Heart left ventricle (tissue), 16 donors: ENCODE measurements at regions of chr1 and their contacts with region 1.

Region 1: DNA sequence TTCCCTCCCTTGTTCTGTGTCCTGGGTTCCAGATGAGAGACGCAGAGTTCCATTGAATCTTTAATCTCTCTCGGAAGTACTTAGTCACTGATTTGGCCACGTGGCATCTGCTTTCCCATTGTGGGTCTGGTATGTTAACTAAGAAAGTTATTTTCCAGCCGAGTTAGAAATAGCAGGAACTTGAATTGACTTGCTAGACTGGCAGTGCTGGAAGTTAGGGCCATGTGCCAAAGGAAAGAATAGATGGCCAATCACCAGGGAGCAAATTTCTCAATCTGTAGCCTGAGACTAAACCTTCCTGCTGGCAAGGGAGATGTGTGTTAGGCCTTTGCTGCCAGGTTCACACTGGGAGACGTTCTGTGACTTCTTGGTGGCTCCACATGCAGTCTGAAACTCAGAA is 24.2 kb upstream of the SLFNL1 start:
- DNase-seq: peak in 4 of 5 donors; percentile 36 to 74 (median 43)
- ATAC-seq: peak; percentile 72 to 90 (median 84)
- H3K4me3 ChIP-seq: peak overlapping the region in 1 of 12 donors; percentile 1
- H3K27ac ChIP-seq: peak overlapping the region in 11 of 12 donors; percentile 25 to 74 (median 58)
- H3K4me1 ChIP-seq: peaks cover 0 to 34% (median 26%) of the 10 kb centered on the region in 12 donors
- H3K27me3 ChIP-seq: no peaks in the 10 kb centered on the region
- CTCF ChIP-seq: no peak
- POLR2A ChIP-seq: no peak

Region 2: DNA sequence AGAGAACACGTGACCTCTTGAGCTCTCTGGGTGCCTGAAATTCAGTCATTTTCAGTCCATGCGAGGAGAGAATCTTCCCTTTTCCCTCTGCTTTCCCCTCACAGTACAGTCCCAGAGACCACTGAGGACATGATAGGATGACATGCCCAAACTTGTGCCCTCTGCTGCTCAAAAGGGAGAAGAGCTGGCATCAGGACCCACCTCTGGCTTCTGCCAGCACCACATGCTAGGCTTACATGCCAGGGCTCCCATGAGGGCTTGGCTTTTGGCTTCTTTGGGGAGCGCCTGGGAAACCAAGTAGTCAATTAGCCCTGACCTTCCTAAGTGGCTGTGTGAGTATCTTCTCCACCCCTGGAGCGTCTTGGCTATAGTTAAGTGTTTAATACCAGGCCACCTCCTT is 275.9 kb before region 1 on chr1:
- intact Hi-C with region 1: no loop called
- DNase-seq: no peak
- ATAC-seq: peak; percentile 21 to 73 (median 42)
- H3K4me3 ChIP-seq: no peak overlapping the region
- H3K27ac ChIP-seq: peak overlapping the region in 4 of 12 donors; percentile 28 to 46 (median 37)
- H3K4me1 ChIP-seq: peaks cover 0 to 51% (median 16%) of the 10 kb centered on the region in 12 donors
- H3K27me3 ChIP-seq: no peaks in the 10 kb centered on the region
- CTCF ChIP-seq: peak in 6 of 12 donors; percentile 12 to 47 (median 25)
- POLR2A ChIP-seq: no peak

Region 3: DNA sequence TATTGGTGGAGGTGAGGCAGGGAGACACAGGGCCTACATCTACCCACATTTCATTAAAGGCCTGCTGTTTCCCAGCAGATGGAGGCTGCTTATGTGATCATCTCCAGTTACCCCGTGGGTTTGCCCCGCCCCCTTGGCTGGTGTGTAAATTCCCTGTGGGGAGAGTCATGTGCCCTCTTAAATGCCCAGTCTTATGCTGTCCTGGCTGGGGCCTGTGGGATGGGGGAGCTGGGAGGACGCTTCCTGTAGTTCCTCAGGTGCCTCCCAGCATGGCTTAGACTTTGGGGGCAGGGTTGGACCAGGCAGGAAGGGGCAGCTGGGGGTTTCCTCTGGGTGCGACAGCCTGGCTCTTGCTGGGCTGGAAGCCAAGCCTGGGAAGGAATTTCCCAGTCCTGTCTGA is 168.0 kb before region 1 on chr1:
- intact Hi-C with region 1: loop called in 1 of 10 experiments (anchors 10 kb)
- DNase-seq: peak in 4 of 5 donors; percentile 30 to 62 (median 59)
- ATAC-seq: peak in 3 of 4 donors; percentile 59 to 74 (median 70)
- H3K4me3 ChIP-seq: no peak overlapping the region
- H3K27ac ChIP-seq: peak overlapping the region in 8 of 12 donors; percentile 20 to 60 (median 52)
- H3K4me1 ChIP-seq: peaks cover 0 to 32% (median 11%) of the 10 kb centered on the region in 12 donors
- H3K27me3 ChIP-seq: peaks cover 0 to 2% (median 0%) of the 10 kb centered on the region in 9 donors
- CTCF ChIP-seq: no peak
- POLR2A ChIP-seq: no peak

Region 4: DNA sequence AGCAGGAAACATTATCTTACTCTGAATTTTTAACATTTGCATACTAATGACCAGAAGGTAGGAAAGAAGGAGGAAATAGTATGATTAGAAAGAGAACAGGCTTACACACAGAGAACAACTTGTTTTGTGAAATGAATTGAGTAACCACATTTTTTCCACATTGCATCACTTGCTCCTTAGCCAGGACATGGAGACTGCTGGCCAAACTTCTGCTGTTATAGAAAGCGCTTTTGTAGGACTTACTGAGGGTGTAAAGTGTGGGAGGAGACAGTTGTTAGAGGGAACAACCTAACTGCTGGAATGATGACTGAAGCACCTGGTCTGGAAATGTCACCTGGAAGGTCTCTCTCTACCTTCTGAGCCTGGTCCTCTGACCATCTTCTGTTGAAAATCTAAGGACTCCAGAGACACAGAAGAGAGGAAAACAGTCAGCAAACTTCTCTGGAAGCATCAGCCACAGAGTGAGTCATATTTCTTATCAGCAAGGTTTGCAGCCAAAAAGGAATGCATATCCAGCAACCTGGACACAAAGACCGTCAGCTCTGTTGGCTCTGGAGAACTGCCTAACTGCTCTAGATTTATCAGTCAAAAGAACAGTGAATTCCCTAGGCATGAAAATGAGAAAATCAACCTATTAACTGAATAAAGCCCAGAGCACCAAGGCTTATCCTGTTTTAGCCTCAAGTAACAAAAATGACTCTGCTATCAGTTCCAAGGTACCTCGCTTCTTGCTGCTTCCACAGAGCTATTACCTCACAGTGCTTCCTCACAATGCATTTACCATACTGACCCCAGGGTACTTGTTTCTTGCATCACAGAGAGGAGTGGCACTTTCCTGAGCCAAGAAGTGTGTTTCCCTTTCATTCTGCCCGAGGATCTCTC is 63.8 kb after region 1 on chr1:
- intact Hi-C with region 1: loop called in 1 of 10 experiments (anchors 10 kb)
- DNase-seq: peak in 4 of 5 donors; percentile 35 to 46 (median 40)
- ATAC-seq: peak; percentile 86 to 94 (median 92)
- H3K4me3 ChIP-seq: no peak overlapping the region
- H3K27ac ChIP-seq: peak overlapping the region; percentile 43 to 96 (median 78)
- H3K4me1 ChIP-seq: peaks cover 2 to 30% (median 23%) of the 10 kb centered on the region in 12 donors
- H3K27me3 ChIP-seq: no peaks in the 10 kb centered on the region
- CTCF ChIP-seq: no peak
- POLR2A ChIP-seq: no peak

Region 5: GRCh38 chr1:41174170-41174569 is 128.4 kb after region 1 on chr1:
- intact Hi-C with region 1: no loop called
- DNase-seq: no peak
- ATAC-seq: no peak
- H3K4me3 ChIP-seq: no peak overlapping the region
- H3K27ac ChIP-seq: no peak overlapping the region
- H3K4me1 ChIP-seq: no peaks in the 10 kb centered on the region
- H3K27me3 ChIP-seq: no peaks in the 10 kb centered on the region
- CTCF ChIP-seq: no peak
- POLR2A ChIP-seq: no peak